Prostate gland (tissue), 2 donors: ENCODE measurements at regions of chr10 and their contacts with region 1.

Region 1: GRCh38 chr10:119859420-119860258 is 13.0 kb downstream of the MCMBP start:
- DNase-seq: no peak
- H3K4me3 ChIP-seq: no peak overlapping the region
- H3K27ac ChIP-seq: no peak overlapping the region
- H3K4me1 ChIP-seq: no peaks in the 10 kb centered on the region
- H3K27me3 ChIP-seq: no peaks in the 10 kb centered on the region
- CTCF ChIP-seq: peak; percentile 13 to 74 (median 60)
- POLR2A ChIP-seq: no peak

Region 2: GRCh38 chr10:119686439-119687191 is 173.0 kb before region 1 on chr10:
- intact Hi-C with region 1: loop called (anchors 5 kb)
- DNase-seq: peak; percentile 63
- H3K4me3 ChIP-seq: peak overlapping the region in 1 of 2 donors; percentile 13
- H3K27ac ChIP-seq: peak overlapping the region; percentile 59 to 65
- H3K4me1 ChIP-seq: peaks cover 4% of the 10 kb centered on the region
- H3K27me3 ChIP-seq: no peaks in the 10 kb centered on the region
- CTCF ChIP-seq: peak; percentile 87 to 94 (median 91)
- POLR2A ChIP-seq: no peak

Region 3: GRCh38 chr10:119750391-119751230 is 109.0 kb before region 1 on chr10:
- intact Hi-C with region 1: loop called (anchors 1 kb)
- DNase-seq: peak; percentile 67
- H3K4me3 ChIP-seq: no peak overlapping the region
- H3K27ac ChIP-seq: no peak overlapping the region
- H3K4me1 ChIP-seq: no peaks in the 10 kb centered on the region
- H3K27me3 ChIP-seq: no peaks in the 10 kb centered on the region
- CTCF ChIP-seq: peak; percentile 37 to 88 (median 73)
- POLR2A ChIP-seq: no peak